A549 (cell line): ENCODE measurements at regions of chr17 and their contacts with region 1.

Region 1: DNA sequence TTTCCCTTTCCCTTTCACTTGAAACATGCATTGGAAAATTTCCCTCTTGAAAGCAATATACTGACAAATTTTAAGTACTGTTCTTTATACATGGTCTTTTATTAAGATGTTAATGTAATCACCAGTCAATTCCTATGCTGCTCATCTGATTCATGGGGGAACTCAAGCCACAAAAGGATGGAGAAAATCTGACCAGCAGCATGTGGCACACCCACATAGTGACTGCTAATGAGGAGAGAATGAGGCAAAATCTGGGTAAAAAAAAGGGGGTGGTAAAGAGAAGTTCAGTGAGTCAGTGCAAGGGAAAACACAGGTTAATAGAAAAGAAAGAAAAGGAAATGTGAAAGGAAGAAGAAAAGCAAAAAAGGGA is 11.3 kb downstream of the RFFL start:
- DNase-seq: no peak
- ATAC-seq: no peak
- H3K4me3 ChIP-seq: no peak overlapping the region
- H3K27ac ChIP-seq: peak overlapping the region in 1 of 2 experiments; percentile 23; a peak in 3 of 6 replicates
- H3K4me1 ChIP-seq: peaks cover 44% of the 10 kb centered on the region
- CTCF ChIP-seq: no peak
- EP300 ChIP-seq: no peak
- POLR2A ChIP-seq: no peak
- RAD21 ChIP-seq: no peak

Region 2: GRCh38 chr17:34961093-34961911 is 90.9 kb before region 1 on chr17 and contains the starts of genes CCT6B and ZNF830:
- CTCF ChIA-PET with region 1: no interaction called
- POLR2A ChIA-PET with region 1: no interaction called
- DNase-seq: peak; percentile 97
- ATAC-seq: peak; percentile 96 to 97
- H3K4me3 ChIP-seq: peak within 1 kb of the TSS; percentile 75
- H3K27ac ChIP-seq: peak within 1 kb of the TSS; percentile 85 to 93
- H3K4me1 ChIP-seq: peaks cover 12% of the 10 kb centered on the region; the same call in 2 of the 3 replicates
- CTCF ChIP-seq: no peak
- EP300 ChIP-seq: no peak
- POLR2A ChIP-seq: peak; percentile 90
- RAD21 ChIP-seq: no peak
- polyA plus RNA-seq, gene CCT6B: 1.9 and 3.1 TPM in 2 replicates
- polyA plus RNA-seq, gene ZNF830: 12.6 and 21.2 TPM in 2 replicates

Region 3: DNA sequence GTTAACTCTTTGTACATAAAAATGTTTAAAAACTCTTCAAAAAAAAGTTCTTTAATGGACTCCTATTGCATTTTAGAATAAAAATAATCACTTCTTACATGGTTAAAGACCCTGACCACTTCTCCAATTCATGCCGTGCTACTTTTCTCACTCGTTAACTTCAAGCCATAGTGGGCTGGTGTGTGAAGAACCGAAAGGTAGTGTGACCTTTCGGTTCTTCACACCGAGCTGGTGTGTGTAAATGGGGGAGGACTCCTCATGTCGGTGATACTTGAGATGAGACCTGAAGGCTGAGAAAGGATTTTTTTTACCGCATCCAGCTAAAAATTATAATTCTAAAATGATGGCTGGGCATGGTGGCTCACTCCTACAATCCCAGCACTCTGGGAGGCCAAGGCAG is 10.8 kb before region 1 on chr17:
- CTCF ChIA-PET with region 1: interaction called, 11 read pairs
- POLR2A ChIA-PET with region 1: no interaction called
- DNase-seq: no peak
- ATAC-seq: no peak
- H3K4me3 ChIP-seq: no peak overlapping the region
- H3K27ac ChIP-seq: no peak overlapping the region
- H3K4me1 ChIP-seq: peaks cover 23% of the 10 kb centered on the region
- CTCF ChIP-seq: no peak
- EP300 ChIP-seq: no peak
- POLR2A ChIP-seq: no peak
- RAD21 ChIP-seq: no peak

Region 4: GRCh38 chr17:35063514-35064223 is 11.4 kb after region 1 on chr17 and contains the start of gene RFFL:
- CTCF ChIA-PET with region 1: interaction called, 10 read pairs
- POLR2A ChIA-PET with region 1: interaction called, 7 read pairs
- DNase-seq: peak; percentile 99
- ATAC-seq: peak; percentile 97 to 100
- H3K4me3 ChIP-seq: peak within 1 kb of the TSS; percentile 38
- H3K27ac ChIP-seq: peak within 1 kb of the TSS; percentile 92 to 93
- H3K4me1 ChIP-seq: peaks cover 59% of the 10 kb centered on the region
- CTCF ChIP-seq: no peak
- EP300 ChIP-seq: peak; percentile 61 to 86; a peak in 3 of 5 replicates
- POLR2A ChIP-seq: peak; percentile 31
- RAD21 ChIP-seq: peak; percentile 56 to 67
- polyA plus RNA-seq, gene RFFL: 35.5 and 49.4 TPM in 2 replicates